CD4-positive, alpha-beta T cell (primary cell): ENCODE measurements at regions of chr2 and their contacts with region 1.

Region 1: GRCh38 chr2:224885836-224886547 is 156.3 kb downstream of the DOCK10 start:
- DNase-seq: peak in 2 of 14 experiments; percentile 28 to 33
- ATAC-seq: no peak
- H3K4me3 ChIP-seq: no peak overlapping the region
- H3K4me3 Mint-ChIP-seq: no peak overlapping the region
- H3K27ac ChIP-seq: no peak overlapping the region
- H3K27ac Mint-ChIP-seq: peak overlapping the region; percentile 57
- H3K4me1 ChIP-seq: peaks cover 5% of the 10 kb centered on the region
- H3K4me1 Mint-ChIP-seq: peaks cover 60% of the 10 kb centered on the region
- H3K27me3 ChIP-seq: no peaks in the 10 kb centered on the region
- H3K27me3 Mint-ChIP-seq: no peaks in the 10 kb centered on the region
- CTCF ChIP-seq: no peak

Region 2: DNA sequence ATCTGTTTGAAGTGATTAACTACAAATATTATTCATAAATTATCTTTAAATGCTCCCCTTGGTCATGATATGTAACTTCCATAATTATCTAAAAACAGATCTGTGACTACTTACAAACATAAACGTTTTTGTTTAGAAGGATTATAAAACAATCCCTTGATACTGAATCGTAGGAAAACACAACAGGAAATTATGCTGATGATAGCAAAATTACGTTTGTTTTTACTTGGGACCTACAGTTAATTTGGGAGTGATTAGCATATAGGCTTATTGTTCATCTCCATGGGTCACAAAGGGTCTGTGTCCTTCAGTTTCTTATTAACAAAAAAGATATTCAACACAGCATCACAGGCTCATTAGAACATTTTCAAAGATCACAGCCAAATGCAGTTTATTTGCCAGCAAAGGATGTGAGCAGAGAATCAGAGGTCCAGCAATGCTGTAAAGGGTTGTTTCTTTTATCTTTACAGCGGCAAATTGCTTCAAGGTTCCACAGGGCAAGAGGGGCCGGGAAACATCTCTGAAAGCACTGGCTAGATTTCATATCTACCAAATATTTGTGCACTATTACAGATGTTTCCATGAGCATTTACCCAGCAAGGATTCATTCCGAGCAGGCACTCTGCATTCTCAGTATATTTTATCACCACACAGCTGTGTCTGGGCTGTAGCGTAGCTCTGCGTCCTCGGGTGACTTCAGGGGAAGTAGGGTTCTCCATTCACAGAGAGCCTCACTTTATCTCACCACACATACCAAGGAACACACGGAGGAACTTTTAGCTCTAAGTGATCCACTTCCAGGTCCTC is 173.9 kb before region 1 on chr2:
- CTCF ChIA-PET with region 1: no interaction called
- POLR2A ChIA-PET with region 1: no interaction called
- intact Hi-C with region 1: no loop called
- DNase-seq: no peak
- ATAC-seq: no peak
- H3K4me3 ChIP-seq: no peak overlapping the region
- H3K4me3 Mint-ChIP-seq: no peak overlapping the region
- H3K27ac ChIP-seq: no peak overlapping the region
- H3K27ac Mint-ChIP-seq: no peak overlapping the region
- H3K4me1 ChIP-seq: no peaks in the 10 kb centered on the region
- H3K4me1 Mint-ChIP-seq: no peaks in the 10 kb centered on the region
- H3K27me3 ChIP-seq: peaks cover 0 to 6% of the 10 kb centered on the region in 2 experiments
- H3K27me3 Mint-ChIP-seq: peaks cover 25% of the 10 kb centered on the region
- CTCF ChIP-seq: no peak

Region 3: GRCh38 chr2:224922142-224922727 is 36.2 kb after region 1 on chr2:
- CTCF ChIA-PET with region 1: no interaction called
- POLR2A ChIA-PET with region 1: no interaction called
- intact Hi-C with region 1: loop called in 1 of 2 experiments (anchors 5 kb)
- DNase-seq: peak in 1 of 14 experiments; percentile 43
- ATAC-seq: no peak
- H3K4me3 ChIP-seq: no peak overlapping the region
- H3K4me3 Mint-ChIP-seq: no peak overlapping the region
- H3K27ac ChIP-seq: peak overlapping the region; percentile 19 to 23
- H3K27ac Mint-ChIP-seq: peak overlapping the region; percentile 97
- H3K4me1 ChIP-seq: peaks cover 42% of the 10 kb centered on the region
- H3K4me1 Mint-ChIP-seq: peaks cover 52% of the 10 kb centered on the region
- H3K27me3 ChIP-seq: no peaks in the 10 kb centered on the region
- H3K27me3 Mint-ChIP-seq: no peaks in the 10 kb centered on the region
- CTCF ChIP-seq: no peak

Region 4: DNA sequence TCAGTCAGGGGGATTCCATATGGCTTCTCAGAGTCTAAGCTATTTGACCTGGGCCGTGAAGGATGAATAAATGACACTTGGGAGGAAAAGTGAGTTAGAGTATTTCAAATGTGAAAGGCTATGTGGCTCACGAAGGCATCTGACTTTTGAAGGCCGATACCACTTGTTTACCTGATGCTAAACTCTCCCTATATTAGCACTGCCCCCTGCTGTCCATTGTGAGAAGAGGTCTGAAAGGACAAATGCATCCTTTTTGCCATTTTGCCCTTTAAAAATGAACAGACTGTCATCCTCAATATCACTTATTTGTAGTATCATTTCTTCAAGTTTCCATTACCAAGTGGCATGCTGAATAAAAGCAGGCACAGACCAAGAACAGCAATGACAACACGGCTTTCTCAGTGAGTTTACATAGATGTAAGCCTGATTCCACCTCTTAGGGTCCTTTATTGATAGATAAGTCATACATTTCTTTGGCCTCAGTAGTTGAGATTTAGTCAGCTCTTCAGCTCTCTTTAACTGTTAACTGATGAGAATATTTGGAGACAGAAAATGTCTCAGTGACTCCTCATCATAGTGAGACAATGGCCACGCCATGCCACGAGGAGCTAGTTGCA is 116.2 kb after region 1 on chr2:
- CTCF ChIA-PET with region 1: interaction called, 4 read pairs
- POLR2A ChIA-PET with region 1: no interaction called
- intact Hi-C with region 1: loop called (anchors 1 to 5 kb)
- DNase-seq: peak; percentile 24 to 88 (median 52)
- ATAC-seq: peak; percentile 88
- H3K4me3 ChIP-seq: no peak overlapping the region
- H3K4me3 Mint-ChIP-seq: no peak overlapping the region
- H3K27ac ChIP-seq: no peak overlapping the region
- H3K27ac Mint-ChIP-seq: peak overlapping the region; percentile 83
- H3K4me1 ChIP-seq: peaks cover 44% of the 10 kb centered on the region
- H3K4me1 Mint-ChIP-seq: peaks cover 87% of the 10 kb centered on the region
- H3K27me3 ChIP-seq: no peaks in the 10 kb centered on the region
- H3K27me3 Mint-ChIP-seq: no peaks in the 10 kb centered on the region
- CTCF ChIP-seq: peak; percentile 74

Region 5: DNA sequence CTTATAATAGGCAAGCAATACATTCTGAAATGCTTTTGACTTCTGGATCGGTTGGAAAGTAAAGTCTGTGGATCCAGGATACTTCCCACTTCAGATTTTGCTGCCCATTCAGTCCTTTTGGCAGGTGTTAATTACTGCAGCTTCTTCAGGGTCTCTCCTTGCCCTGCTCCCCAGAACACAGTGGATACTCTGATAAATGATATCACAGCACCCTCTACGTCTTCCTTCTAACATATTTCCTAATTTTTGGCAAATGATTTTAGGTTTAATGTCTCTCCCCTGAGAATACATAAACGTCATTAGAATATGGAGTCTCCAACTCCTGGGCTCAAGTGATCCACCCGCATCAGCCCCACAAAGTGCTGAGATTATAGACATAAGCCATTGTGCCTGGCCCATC is 763.3 kb after region 1 on chr2:
- CTCF ChIA-PET with region 1: no interaction called
- POLR2A ChIA-PET with region 1: no interaction called
- intact Hi-C with region 1: no loop called
- DNase-seq: no peak
- ATAC-seq: no peak
- H3K4me3 ChIP-seq: no peak overlapping the region
- H3K4me3 Mint-ChIP-seq: no peak overlapping the region
- H3K27ac ChIP-seq: no peak overlapping the region
- H3K27ac Mint-ChIP-seq: no peak overlapping the region
- H3K4me1 ChIP-seq: no peaks in the 10 kb centered on the region
- H3K4me1 Mint-ChIP-seq: no peaks in the 10 kb centered on the region
- H3K27me3 ChIP-seq: peaks cover 0 to 3% of the 10 kb centered on the region in 2 experiments
- H3K27me3 Mint-ChIP-seq: peaks cover 11% of the 10 kb centered on the region
- CTCF ChIP-seq: no peak